ENCODE measurements at regions of chr10 and their contacts with region 1.

Region 1: GRCh38 chr10:48656241-48656913 is 28.3 kb upstream of the WDFY4 start:
- DNase-seq: peak; percentile 88
- H3K4me3 Mint-ChIP-seq: peak overlapping the region; percentile 73
- H3K27ac Mint-ChIP-seq: no peak overlapping the region
- H3K4me1 Mint-ChIP-seq: peaks cover 13% of the 10 kb centered on the region
- H3K27me3 Mint-ChIP-seq: peaks cover 58% of the 10 kb centered on the region
- CTCF ChIP-seq: peak; percentile 98

Region 2: DNA sequence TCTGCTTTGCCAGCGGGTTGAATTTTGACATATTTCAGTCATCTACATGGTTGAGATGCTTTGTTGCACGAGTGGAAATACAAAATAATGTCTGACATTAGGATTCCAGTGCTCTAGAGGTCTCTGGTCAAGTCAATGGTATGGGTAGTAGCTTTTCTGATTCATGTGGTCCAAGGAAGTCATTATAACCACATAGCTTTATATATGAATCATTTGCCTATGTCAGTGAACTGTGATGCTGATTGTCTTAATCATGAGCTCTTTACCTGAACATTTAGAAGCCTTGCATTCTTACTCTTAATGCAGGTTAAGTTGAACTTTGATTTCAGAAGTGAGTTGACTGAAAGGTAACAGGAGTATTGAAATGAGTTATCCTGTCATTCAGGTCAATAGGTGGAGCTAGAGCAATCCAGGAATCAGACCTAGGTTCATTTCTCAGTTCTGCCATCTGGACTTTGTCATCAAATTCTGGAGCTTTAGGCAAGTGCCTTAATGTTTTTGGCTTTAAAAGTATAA is 346.6 kb before region 1 on chr10:
- CTCF ChIA-PET with region 1: interaction called, 31 read pairs
- POLR2A ChIA-PET with region 1: no interaction called
- intact Hi-C with region 1: no loop called
- DNase-seq: peak; percentile 38
- H3K4me3 Mint-ChIP-seq: no peak overlapping the region
- H3K27ac Mint-ChIP-seq: no peak overlapping the region
- H3K4me1 Mint-ChIP-seq: peaks cover 23% of the 10 kb centered on the region
- H3K27me3 Mint-ChIP-seq: no peaks in the 10 kb centered on the region
- CTCF ChIP-seq: peak; percentile 26

Region 3: GRCh38 chr10:48533951-48534720 is 122.2 kb before region 1 on chr10:
- CTCF ChIA-PET with region 1: interaction called, 28 read pairs
- POLR2A ChIA-PET with region 1: interaction called, 3 read pairs
- intact Hi-C with region 1: no loop called
- DNase-seq: no peak
- H3K4me3 Mint-ChIP-seq: no peak overlapping the region
- H3K27ac Mint-ChIP-seq: no peak overlapping the region
- H3K4me1 Mint-ChIP-seq: no peaks in the 10 kb centered on the region
- H3K27me3 Mint-ChIP-seq: no peaks in the 10 kb centered on the region
- CTCF ChIP-seq: no peak

Region 4: DNA sequence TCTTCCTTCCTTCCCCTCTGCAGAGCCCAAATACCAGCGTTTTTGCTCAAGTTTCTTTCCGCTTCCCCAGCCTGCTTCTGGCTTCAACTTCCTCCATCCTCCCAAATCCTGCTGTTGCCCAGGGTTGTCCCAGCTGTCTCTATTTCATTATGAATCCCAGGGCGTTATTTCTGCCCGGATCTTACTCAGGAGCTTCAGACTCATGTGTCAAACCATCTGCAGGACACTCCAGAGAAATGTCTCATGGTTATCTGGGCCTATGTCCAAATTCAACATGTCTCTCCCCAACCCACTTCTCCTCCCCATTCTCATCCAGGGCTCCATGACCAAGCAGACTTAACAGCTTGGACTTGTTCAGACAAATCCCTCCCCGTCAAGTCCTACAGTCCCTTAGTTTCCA is 67.1 kb before region 1 on chr10:
- CTCF ChIA-PET with region 1: interaction called, 80 read pairs
- POLR2A ChIA-PET with region 1: interaction called, 4 read pairs
- intact Hi-C with region 1: no loop called
- DNase-seq: peak; percentile 87
- H3K4me3 Mint-ChIP-seq: peak overlapping the region; percentile 44
- H3K27ac Mint-ChIP-seq: peak overlapping the region; percentile 90
- H3K4me1 Mint-ChIP-seq: peaks cover 20% of the 10 kb centered on the region
- H3K27me3 Mint-ChIP-seq: no peaks in the 10 kb centered on the region
- CTCF ChIP-seq: no peak

Region 5: GRCh38 chr10:48623607-48624132 is 32.7 kb before region 1 on chr10:
- CTCF ChIA-PET with region 1: interaction called, 25 read pairs
- POLR2A ChIA-PET with region 1: no interaction called
- intact Hi-C with region 1: no loop called
- DNase-seq: no peak
- H3K4me3 Mint-ChIP-seq: no peak overlapping the region
- H3K27ac Mint-ChIP-seq: no peak overlapping the region
- H3K4me1 Mint-ChIP-seq: no peaks in the 10 kb centered on the region
- H3K27me3 Mint-ChIP-seq: peaks cover 12% of the 10 kb centered on the region
- CTCF ChIP-seq: no peak

Region 6: GRCh38 chr10:48981310-48981907 is 325.0 kb after region 1 on chr10:
- CTCF ChIA-PET with region 1: interaction called, 6 read pairs
- POLR2A ChIA-PET with region 1: no interaction called
- intact Hi-C with region 1: loop called (anchors 1 kb)
- DNase-seq: peak; percentile 63
- H3K4me3 Mint-ChIP-seq: no peak overlapping the region
- H3K27ac Mint-ChIP-seq: no peak overlapping the region
- H3K4me1 Mint-ChIP-seq: no peaks in the 10 kb centered on the region
- H3K27me3 Mint-ChIP-seq: no peaks in the 10 kb centered on the region
- CTCF ChIP-seq: peak; percentile 73

Region 7: DNA sequence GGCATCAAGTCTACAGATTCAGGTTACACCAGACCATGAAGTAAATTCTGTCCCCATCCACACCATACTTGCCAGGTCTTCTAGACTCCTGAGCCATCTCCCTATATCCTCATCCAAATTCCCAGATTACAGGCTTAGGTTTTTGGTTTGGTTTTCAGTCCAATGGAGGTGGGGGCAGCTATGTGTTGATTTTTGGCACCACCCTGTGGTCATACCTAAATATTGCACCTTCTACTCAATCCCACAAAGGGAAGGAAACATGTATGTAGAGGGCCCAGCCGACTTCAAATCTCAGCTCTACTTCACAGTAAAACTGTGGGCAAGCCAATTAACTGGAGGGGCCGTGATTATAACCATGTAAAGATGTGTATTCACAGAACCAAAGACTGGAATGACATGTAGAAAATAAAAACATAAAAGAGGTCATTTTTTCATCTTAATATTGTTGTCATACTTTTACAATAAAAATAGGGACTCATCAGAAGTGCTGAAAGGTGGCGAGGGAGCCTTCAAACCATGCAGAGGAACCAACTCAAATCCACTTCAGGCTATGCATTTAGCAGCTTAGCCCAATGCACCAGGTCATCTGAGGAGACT is 862.7 kb after region 1 on chr10:
- CTCF ChIA-PET with region 1: interaction called, 27 read pairs
- POLR2A ChIA-PET with region 1: interaction called, 4 read pairs
- intact Hi-C with region 1: loop called (anchors 2 kb)
- DNase-seq: peak; percentile 60
- H3K4me3 Mint-ChIP-seq: no peak overlapping the region
- H3K27ac Mint-ChIP-seq: no peak overlapping the region
- H3K4me1 Mint-ChIP-seq: peaks cover 5% of the 10 kb centered on the region
- H3K27me3 Mint-ChIP-seq: no peaks in the 10 kb centered on the region
- CTCF ChIP-seq: peak; percentile 66